Astrocyte of the cerebellum (primary cell): ENCODE measurements at regions of chr21 and their contacts with region 1.

Region 1: GRCh38 chr21:35547946-35548774 is 499.1 kb upstream of the RUNX1 start:
- DNase-seq: no peak
- H3K4me3 ChIP-seq: no peak overlapping the region
- CTCF ChIP-seq: no peak

Region 2: GRCh38 chr21:35633501-35633900 is 85.3 kb after region 1 on chr21:
- in situ Hi-C with region 1: loop called (anchors 5 kb)
- DNase-seq: no peak
- H3K4me3 ChIP-seq: no peak overlapping the region
- CTCF ChIP-seq: no peak